Activated naive CD8-positive, alpha-beta T cell treated with anti-CD3 and anti-CD28 coated beads, Interleukin-2, amount 10 ng/mL, durations not matched to agents 7 days and 5 days (primary cell): ENCODE measurements at regions of chr17 and their contacts with region 1.

Region 1: GRCh38 chr17:57849874-57850754 is at the start of gene MRPS23:
- DNase-seq: peak; percentile 94
- ATAC-seq: peak; percentile 89
- H3K4me3 Mint-ChIP-seq: peak within 1 kb of the TSS; percentile 97
- H3K27ac Mint-ChIP-seq: peak within 1 kb of the TSS; percentile 99
- H3K4me1 Mint-ChIP-seq: peaks cover 26% of the 10 kb centered on the region
- H3K27me3 Mint-ChIP-seq: no peaks in the 10 kb centered on the region
- total RNA-seq, gene MRPS23: 32.1 to 38.2 TPM

Region 2: DNA sequence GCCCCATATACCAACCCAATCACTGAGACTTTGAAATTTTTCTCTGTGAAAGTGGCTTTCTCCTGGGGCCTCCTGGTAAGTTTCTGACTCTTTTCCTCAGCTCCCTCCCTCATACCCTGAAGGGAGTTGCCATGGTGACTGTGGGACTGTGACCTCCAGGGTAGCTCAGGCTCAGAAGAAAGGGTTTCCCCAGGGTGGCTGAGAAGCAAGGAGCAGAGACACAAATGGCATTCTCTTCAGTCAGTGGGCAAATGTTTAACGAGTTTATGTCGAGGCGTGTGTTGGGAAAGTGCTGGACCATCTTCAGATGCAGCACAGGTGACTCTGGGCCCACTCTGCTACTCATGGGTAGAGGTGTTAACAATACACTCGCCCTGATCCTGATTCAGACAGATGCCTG is 47.1 kb before region 1 on chr17:
- POLR2A ChIA-PET with region 1: no interaction called
- DNase-seq: no peak
- ATAC-seq: no peak
- H3K4me3 Mint-ChIP-seq: no peak overlapping the region
- H3K27ac Mint-ChIP-seq: no peak overlapping the region
- H3K4me1 Mint-ChIP-seq: no peaks in the 10 kb centered on the region
- H3K27me3 Mint-ChIP-seq: peaks cover 24% of the 10 kb centered on the region

Region 3: GRCh38 chr17:57834127-57834741 is 15.9 kb before region 1 on chr17:
- POLR2A ChIA-PET with region 1: interaction called, 12 read pairs
- DNase-seq: peak; percentile 39
- ATAC-seq: peak; percentile 59
- H3K4me3 Mint-ChIP-seq: no peak overlapping the region
- H3K27ac Mint-ChIP-seq: peak overlapping the region; percentile 62
- H3K4me1 Mint-ChIP-seq: peaks cover 12% of the 10 kb centered on the region
- H3K27me3 Mint-ChIP-seq: no peaks in the 10 kb centered on the region

Region 4: DNA sequence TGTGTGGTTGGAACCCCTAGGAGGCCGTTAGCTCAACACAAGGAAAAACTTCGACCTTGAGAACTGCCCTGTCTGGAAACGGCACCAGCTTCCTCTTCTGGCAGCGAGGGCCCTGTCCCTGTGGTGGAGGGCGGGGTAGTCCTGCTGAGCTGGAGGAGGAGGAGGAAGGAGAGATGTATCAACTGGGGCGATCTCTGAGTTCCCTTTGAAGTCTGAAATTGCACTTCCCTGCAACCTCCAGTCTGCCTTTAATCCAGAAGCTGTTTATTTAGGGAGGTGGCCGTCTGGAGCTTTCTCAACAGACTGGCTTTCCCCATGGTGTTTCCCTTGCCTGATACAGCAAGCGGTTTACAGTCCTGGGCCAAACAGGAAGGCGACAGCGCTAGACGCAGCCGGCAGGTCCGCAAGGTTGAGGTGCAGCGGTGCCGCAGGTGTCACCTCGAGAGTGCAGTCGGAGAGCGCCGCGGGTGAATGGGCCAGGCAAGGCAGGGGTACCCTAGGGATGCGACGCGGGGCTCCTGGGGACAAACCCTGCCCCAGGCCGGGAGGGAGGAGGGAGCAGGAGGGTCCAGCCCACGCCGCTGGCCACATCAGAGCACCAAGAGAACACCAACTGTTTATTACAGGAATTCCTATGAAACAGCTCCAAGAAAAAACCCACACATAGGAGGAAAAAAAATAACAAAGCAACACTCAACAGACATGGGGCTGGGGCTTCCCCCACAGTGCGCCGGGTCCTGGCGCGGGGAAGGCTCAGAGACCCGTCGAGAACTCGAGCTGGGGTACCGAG is 11.1 kb after region 1 on chr17:
- POLR2A ChIA-PET with region 1: interaction called, 11 read pairs
- DNase-seq: peak; percentile 53
- ATAC-seq: peak; percentile 77
- H3K4me3 Mint-ChIP-seq: peak overlapping the region; percentile 85
- H3K27ac Mint-ChIP-seq: no peak overlapping the region
- H3K4me1 Mint-ChIP-seq: peaks cover 15% of the 10 kb centered on the region
- H3K27me3 Mint-ChIP-seq: peaks cover 46% of the 10 kb centered on the region

Region 5: DNA sequence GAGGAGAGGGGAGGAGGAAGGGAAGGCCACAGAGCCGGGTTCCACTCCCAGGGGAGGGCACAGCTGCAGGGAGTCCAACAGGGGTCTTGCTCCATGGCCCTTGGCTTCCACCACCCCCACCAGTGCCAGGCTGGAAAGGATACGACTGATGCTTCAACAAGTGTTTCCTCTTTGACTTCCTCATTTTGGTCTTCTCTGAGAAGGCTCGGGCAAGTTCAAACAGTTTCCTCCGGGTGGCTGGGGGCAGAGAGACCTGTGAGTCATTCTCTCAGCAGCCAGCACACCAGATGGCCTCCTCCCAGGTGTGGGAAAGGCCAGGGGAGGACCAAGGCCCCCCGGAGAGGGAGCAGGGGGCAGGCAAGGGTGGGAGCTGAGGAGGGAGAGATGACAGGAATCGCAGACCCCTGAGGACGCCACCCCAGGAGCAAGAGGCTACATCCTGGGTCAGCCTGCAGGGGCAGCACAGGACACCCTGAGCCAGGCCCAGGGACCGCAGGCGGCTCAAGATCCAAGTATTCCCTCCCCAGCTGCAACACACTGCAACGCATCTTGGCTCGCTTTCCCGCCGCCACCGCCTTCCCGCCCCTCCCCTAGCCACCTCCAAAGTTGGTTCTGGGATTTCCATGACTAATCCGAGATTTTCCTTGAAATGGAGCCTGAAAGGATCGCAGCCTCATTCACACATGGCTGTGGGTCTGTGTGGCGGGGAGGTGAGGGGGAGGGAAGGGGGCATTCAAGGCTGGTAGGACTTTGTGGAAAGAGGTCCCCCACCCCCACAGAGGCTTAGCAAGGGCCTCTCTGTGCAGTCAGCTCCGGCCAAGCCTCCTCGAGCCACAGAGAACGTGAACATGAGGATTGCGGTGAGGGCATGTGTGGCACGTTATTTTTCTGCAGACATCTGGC is 18.1 kb after region 1 on chr17:
- POLR2A ChIA-PET with region 1: interaction called, 10 read pairs
- DNase-seq: peak; percentile 62
- ATAC-seq: peak; percentile 92
- H3K4me3 Mint-ChIP-seq: peak overlapping the region; percentile 59
- H3K27ac Mint-ChIP-seq: peak overlapping the region; percentile 84
- H3K4me1 Mint-ChIP-seq: peaks cover 23% of the 10 kb centered on the region
- H3K27me3 Mint-ChIP-seq: peaks cover 35% of the 10 kb centered on the region

Region 6: GRCh38 chr17:57879463-57880433 is 29.6 kb after region 1 on chr17:
- POLR2A ChIA-PET with region 1: no interaction called
- DNase-seq: no peak
- ATAC-seq: peak; percentile 30
- H3K4me3 Mint-ChIP-seq: no peak overlapping the region
- H3K27ac Mint-ChIP-seq: no peak overlapping the region
- H3K4me1 Mint-ChIP-seq: peaks cover 17% of the 10 kb centered on the region
- H3K27me3 Mint-ChIP-seq: peaks cover 27% of the 10 kb centered on the region

Region 7: GRCh38 chr17:58006924-58007780 is 157.0 kb after region 1 on chr17 and contains the start of gene SRSF1:
- POLR2A ChIA-PET with region 1: interaction called, 44 read pairs
- DNase-seq: peak; percentile 96
- ATAC-seq: peak; percentile 86
- H3K4me3 Mint-ChIP-seq: peak within 1 kb of the TSS; percentile 98
- H3K27ac Mint-ChIP-seq: peak within 1 kb of the TSS; percentile 99
- H3K4me1 Mint-ChIP-seq: peaks cover 43% of the 10 kb centered on the region
- H3K27me3 Mint-ChIP-seq: no peaks in the 10 kb centered on the region
- total RNA-seq, gene SRSF1: 314 to 323 TPM

Region 8: DNA sequence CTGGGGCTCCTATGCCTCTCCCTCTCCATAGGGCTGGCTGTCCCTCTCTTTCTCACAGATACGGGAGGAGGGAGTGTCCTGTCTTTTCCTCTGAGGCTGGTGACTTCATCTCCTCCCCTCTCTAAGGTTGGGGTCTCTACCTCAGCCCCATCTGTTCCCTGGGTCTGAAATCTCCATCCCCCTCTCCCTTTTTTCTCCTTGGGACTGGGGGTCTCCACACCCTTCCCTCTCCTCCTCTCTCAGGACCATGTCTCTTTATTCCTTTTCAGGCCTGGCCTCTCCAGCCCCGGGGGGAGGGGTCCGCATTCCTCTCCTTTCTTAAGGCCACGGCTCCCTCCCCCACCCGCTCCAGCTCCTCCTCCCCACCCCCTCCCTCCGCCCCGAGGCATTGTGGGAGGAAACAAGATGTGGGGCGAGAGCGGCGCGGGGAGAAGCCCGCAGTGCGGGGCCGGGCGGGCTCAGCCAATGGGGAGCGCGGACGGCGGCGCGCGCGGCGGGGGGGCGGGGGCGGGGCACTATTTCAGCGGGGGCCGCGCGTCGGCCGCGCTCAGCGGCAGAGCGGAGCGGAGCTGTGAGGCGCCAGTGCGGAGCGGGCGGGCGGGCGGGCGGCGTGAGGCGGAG is 232.9 kb after region 1 on chr17 and contains the start of gene DYNLL2:
- POLR2A ChIA-PET with region 1: interaction called, 11 read pairs
- DNase-seq: peak; percentile 86
- ATAC-seq: peak; percentile 79
- H3K4me3 Mint-ChIP-seq: peak within 1 kb of the TSS; percentile 86
- H3K27ac Mint-ChIP-seq: peak within 1 kb of the TSS; percentile 83
- H3K4me1 Mint-ChIP-seq: peaks cover 32% of the 10 kb centered on the region
- H3K27me3 Mint-ChIP-seq: peaks cover 26% of the 10 kb centered on the region
- total RNA-seq, gene DYNLL2: 29.5 to 31.3 TPM